IMR-90 (cell line): ENCODE measurements at regions of chr3 and their contacts with region 1.

Region 1: GRCh38 chr3:114827495-114827894 is 319.6 kb downstream of the ZBTB20 start:
- DNase-seq: peak; percentile 58
- ATAC-seq: peak; percentile 77
- H3K4me3 ChIP-seq: no peak overlapping the region
- H3K27ac ChIP-seq: no peak overlapping the region
- H3K4me1 ChIP-seq: no peaks in the 10 kb centered on the region
- H3K27me3 ChIP-seq: no peaks in the 10 kb centered on the region
- CTCF ChIP-seq: peak; percentile 61
- POLR2A ChIP-seq: no peak
- RAD21 ChIP-seq: peak; percentile 74

Region 2: DNA sequence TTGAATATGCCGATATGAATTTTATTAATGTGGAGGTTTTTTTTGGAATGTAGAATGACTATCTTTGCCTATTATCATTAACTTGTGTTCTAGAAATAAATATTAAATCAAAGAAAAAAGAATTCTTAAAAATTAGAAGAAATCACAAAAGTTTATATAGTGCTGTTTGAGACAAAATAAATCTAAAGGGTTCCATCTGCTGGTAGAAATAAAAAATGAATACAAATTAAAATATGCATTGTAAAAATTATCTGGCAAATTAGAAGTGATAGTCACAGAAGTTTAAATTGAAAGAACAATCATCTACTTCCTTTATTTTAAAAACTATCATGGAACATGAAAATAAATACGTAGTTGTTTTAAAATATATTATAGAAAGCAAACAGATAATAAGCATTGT is 342.3 kb after region 1 on chr3:
- CTCF ChIA-PET with region 1: no interaction called
- POLR2A ChIA-PET with region 1: no interaction called
- dilution Hi-C with region 1: no loop called
- in situ Hi-C with region 1: loop called (anchors 10 kb)
- intact Hi-C with region 1: loop called (anchors 2 kb)
- DNase-seq: no peak
- ATAC-seq: no peak
- H3K4me3 ChIP-seq: no peak overlapping the region
- H3K27ac ChIP-seq: no peak overlapping the region
- H3K4me1 ChIP-seq: no peaks in the 10 kb centered on the region; the same call in 1 of the 2 replicates
- H3K27me3 ChIP-seq: no peaks in the 10 kb centered on the region
- CTCF ChIP-seq: peak; percentile 44
- POLR2A ChIP-seq: no peak
- RAD21 ChIP-seq: peak; percentile 28; the same call in 1 of the 2 replicates

Region 3: GRCh38 chr3:115208066-115208750 is 380.7 kb after region 1 on chr3:
- CTCF ChIA-PET with region 1: interaction called, 10 read pairs
- POLR2A ChIA-PET with region 1: no interaction called
- dilution Hi-C with region 1: no loop called
- in situ Hi-C with region 1: no loop called
- intact Hi-C with region 1: no loop called
- DNase-seq: no peak
- ATAC-seq: no peak
- H3K4me3 ChIP-seq: no peak overlapping the region
- H3K27ac ChIP-seq: no peak overlapping the region
- H3K4me1 ChIP-seq: no peaks in the 10 kb centered on the region
- H3K27me3 ChIP-seq: no peaks in the 10 kb centered on the region; the same call in 1 of the 2 replicates
- CTCF ChIP-seq: no peak
- POLR2A ChIP-seq: no peak
- RAD21 ChIP-seq: no peak